WTC11 (cell line): ENCODE measurements at regions of chr15 and their contacts with region 1.

Region 1: DNA sequence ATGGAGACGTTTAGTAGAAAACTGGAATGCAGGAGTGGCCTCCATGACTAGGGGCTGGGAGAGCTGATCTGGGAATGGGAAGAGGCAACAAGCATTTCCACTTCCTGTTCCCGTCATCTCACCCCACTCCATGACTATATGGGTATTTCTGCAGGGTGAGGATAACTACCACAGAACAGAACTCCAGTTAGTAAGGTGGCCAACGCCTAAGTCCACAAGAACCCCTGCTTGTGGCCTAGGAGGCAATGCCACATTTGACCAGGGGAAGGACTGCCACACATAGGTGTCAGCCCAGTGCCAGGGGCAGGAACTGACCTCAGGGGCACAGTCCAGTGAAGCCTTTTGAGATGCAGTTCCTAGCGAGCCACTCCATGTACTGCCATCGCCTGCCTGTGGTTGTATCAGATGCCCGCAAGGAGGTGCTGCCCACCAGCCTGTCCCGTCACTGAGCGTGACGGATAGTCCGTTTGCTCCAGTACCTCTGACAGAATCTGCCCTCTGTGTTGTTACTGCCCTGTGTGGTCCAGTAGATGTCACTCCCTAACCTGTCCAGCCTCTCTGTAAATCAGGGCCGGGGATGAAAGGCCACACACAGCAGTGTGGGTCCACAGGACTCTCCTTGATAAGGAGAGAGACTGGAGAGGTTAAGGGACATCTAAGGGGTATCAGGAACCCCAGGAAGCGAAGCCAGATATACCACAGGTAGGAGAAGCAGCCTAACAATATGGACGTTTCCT is 3.5 kb upstream of the MTFMT start:
- DNase-seq: peak; percentile 83
- ATAC-seq: peak; percentile 86
- H3K4me3 Mint-ChIP-seq: peak overlapping the region; percentile 14; the same call in 1 of the 2 replicates
- H3K27ac Mint-ChIP-seq: no peak overlapping the region
- H3K4me1 Mint-ChIP-seq: peaks cover 18% of the 10 kb centered on the region
- H3K27me3 Mint-ChIP-seq: peaks cover 6% of the 10 kb centered on the region
- CTCF ChIP-seq: peak; percentile 51

Region 2: GRCh38 chr15:65054333-65055200 is 21.6 kb after region 1 on chr15:
- CTCF ChIA-PET with region 1: interaction called, 15 read pairs
- POLR2A ChIA-PET with region 1: no interaction called
- DNase-seq: peak; percentile 86
- ATAC-seq: peak; percentile 82
- H3K4me3 Mint-ChIP-seq: no peak overlapping the region
- H3K27ac Mint-ChIP-seq: no peak overlapping the region
- H3K4me1 Mint-ChIP-seq: peaks cover 4% of the 10 kb centered on the region; the same call in 1 of the 2 replicates
- H3K27me3 Mint-ChIP-seq: peaks cover 2% of the 10 kb centered on the region; the same call in 1 of the 2 replicates
- CTCF ChIP-seq: peak; percentile 83

Region 3: DNA sequence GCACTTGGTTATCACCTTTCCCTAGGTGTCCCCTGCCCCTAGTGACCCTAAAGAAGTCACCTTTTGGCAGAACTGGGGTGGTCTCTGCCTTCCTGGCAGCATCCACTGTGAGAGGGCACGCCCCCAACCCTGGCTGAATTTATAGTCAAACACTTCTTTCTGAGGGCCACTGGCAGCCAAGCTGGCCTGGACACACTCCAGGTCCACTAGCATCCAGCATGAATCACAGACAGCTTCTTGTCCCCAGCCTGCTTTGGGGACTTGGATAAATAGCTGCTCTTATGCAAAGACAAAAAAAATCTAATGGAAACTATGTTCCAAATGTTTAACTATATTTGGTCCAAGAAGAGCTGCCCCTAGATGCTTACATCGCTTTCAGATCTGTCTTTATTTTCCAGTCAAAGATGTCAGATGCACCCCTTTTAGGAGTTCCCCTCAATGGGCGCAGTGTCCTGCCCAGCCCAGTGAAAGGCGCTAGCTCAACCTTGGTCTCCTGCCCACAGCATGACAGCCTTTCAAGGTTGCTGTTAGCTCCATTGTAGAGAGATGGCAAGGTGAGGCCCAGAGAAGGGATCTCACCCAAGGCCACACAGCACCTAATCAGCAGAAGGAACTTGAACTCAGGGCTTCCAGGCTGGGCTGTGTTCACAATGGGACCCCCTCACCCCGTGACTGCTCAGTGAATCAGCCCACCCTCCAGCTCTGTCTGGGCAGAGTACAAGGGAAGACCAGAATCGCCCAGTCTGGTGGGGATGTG is 27.9 kb after region 1 on chr15:
- CTCF ChIA-PET with region 1: interaction called, 11 read pairs
- POLR2A ChIA-PET with region 1: no interaction called
- DNase-seq: no peak
- ATAC-seq: no peak
- H3K4me3 Mint-ChIP-seq: no peak overlapping the region
- H3K27ac Mint-ChIP-seq: no peak overlapping the region
- H3K4me1 Mint-ChIP-seq: peaks cover 8% of the 10 kb centered on the region
- H3K27me3 Mint-ChIP-seq: no peaks in the 10 kb centered on the region
- CTCF ChIP-seq: no peak

Region 4: DNA sequence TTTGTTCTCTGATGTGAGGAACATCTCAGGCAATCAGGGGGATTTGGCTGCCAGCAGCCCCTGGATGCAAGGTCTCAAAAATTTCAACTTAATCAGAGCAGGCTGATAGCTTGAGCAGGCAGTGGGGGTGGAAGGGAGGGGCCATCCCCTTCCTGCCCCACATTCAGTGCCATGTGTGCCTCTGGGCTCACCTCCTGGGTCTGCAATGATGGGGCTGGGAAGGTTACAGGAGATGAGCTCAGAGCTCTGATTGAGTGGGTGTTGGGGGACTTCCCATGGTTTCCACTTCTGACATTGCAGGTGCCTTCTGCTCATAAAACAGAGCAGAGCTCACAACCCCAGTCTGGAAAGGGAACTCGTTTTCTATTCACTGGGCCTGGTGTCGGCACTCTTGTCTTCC is 216.7 kb after region 1 on chr15:
- CTCF ChIA-PET with region 1: no interaction called
- POLR2A ChIA-PET with region 1: no interaction called
- DNase-seq: no peak
- ATAC-seq: no peak
- H3K4me3 Mint-ChIP-seq: no peak overlapping the region
- H3K27ac Mint-ChIP-seq: no peak overlapping the region
- H3K4me1 Mint-ChIP-seq: peaks cover 10% of the 10 kb centered on the region
- H3K27me3 Mint-ChIP-seq: no peaks in the 10 kb centered on the region
- CTCF ChIP-seq: no peak

Region 5: GRCh38 chr15:65286704-65287519 is 253.9 kb after region 1 on chr15 and contains the start of gene PARP16:
- CTCF ChIA-PET with region 1: no interaction called
- POLR2A ChIA-PET with region 1: no interaction called
- DNase-seq: peak; percentile 95
- ATAC-seq: peak; percentile 97
- H3K4me3 Mint-ChIP-seq: peak within 1 kb of the TSS; percentile 76
- H3K27ac Mint-ChIP-seq: peak within 1 kb of the TSS; percentile 83
- H3K4me1 Mint-ChIP-seq: peaks cover 17% of the 10 kb centered on the region
- H3K27me3 Mint-ChIP-seq: peaks cover 36% of the 10 kb centered on the region
- CTCF ChIP-seq: no peak
- total RNA-seq, gene PARP16: 4.7 to 6.2 TPM (median 5.8 TPM) in 3 replicates